Activated B cell treated with CpG ODN at 0.5 μM for 24 hours (primary cell): ENCODE measurements at regions of chr19 and their contacts with region 1.

Region 1: GRCh38 chr19:16789238-16789637 is 40.0 kb upstream of the SIN3B start:
- DNase-seq: no peak
- ATAC-seq: no peak
- H3K4me3 Mint-ChIP-seq: no peak overlapping the region
- H3K27ac Mint-ChIP-seq: no peak overlapping the region
- H3K4me1 Mint-ChIP-seq: no peaks in the 10 kb centered on the region
- H3K27me3 Mint-ChIP-seq: peaks cover 2% of the 10 kb centered on the region
- CTCF ChIP-seq: no peak

Region 2: DNA sequence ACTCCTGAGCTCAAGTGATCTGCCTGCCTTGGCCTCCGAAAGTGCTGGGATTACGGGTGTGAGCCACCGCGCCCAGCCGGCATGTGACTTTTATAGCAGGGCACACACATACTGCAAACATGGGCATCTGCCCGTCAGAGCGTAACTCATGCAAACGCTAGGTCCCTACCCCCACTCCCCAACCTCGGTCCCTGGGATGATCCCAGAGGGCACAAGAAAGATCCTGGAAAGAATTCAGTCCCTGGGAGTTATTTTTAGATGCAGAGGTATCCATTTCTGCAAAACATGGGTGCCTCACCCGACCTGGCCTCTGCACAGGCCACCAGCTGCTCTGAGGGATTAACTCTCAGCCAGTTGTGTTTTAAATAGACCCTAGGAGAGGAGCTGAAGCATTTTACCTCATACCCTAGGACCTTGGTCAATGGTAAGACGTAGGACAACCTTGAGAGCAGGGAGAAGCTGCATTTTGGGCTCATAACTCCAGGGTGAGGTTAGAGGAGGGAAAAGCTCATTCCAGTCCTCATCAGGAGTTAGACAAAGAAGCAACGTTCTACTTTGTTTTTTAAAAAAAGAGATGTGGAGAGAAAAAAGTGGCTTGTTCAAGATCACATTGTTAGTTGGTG is 117.5 kb before region 1 on chr19:
- CTCF ChIA-PET with region 1: no interaction called
- POLR2A ChIA-PET with region 1: interaction called, 11 read pairs
- intact Hi-C with region 1: no loop called
- DNase-seq: no peak
- ATAC-seq: no peak
- H3K4me3 Mint-ChIP-seq: no peak overlapping the region
- H3K27ac Mint-ChIP-seq: no peak overlapping the region
- H3K4me1 Mint-ChIP-seq: no peaks in the 10 kb centered on the region
- H3K27me3 Mint-ChIP-seq: no peaks in the 10 kb centered on the region
- CTCF ChIP-seq: no peak